CD14-positive monocyte (primary cell): ENCODE measurements at regions of chr6 and their contacts with region 1.

Region 1: GRCh38 chr6:139109558-139109957 is 25.3 kb upstream of the HECA start:
- DNase-seq: peak in 1 of 3 donors; percentile 23
- H3K4me3 ChIP-seq: no peak overlapping the region
- H3K4me3 Mint-ChIP-seq: no peak overlapping the region
- H3K27ac ChIP-seq: no peak overlapping the region
- H3K27ac Mint-ChIP-seq: no peak overlapping the region
- H3K4me1 ChIP-seq: no peaks in the 10 kb centered on the region
- H3K4me1 Mint-ChIP-seq: peaks cover 4% of the 10 kb centered on the region
- H3K27me3 ChIP-seq: no peaks in the 10 kb centered on the region
- H3K27me3 Mint-ChIP-seq: peaks cover 0 to 6% (median 0%) of the 10 kb centered on the region in 3 donors
- CTCF ChIP-seq: peak; percentile 28

Region 2: GRCh38 chr6:139091826-139092225 is 17.7 kb before region 1 on chr6:
- intact Hi-C with region 1: no loop called
- DNase-seq: no peak
- H3K4me3 ChIP-seq: no peak overlapping the region
- H3K4me3 Mint-ChIP-seq: no peak overlapping the region
- H3K27ac ChIP-seq: no peak overlapping the region
- H3K27ac Mint-ChIP-seq: no peak overlapping the region
- H3K4me1 ChIP-seq: no peaks in the 10 kb centered on the region
- H3K4me1 Mint-ChIP-seq: no peaks in the 10 kb centered on the region
- H3K27me3 ChIP-seq: no peaks in the 10 kb centered on the region
- H3K27me3 Mint-ChIP-seq: peaks cover 0 to 3% (median 3%) of the 10 kb centered on the region in 3 donors
- CTCF ChIP-seq: no peak

Region 3: GRCh38 chr6:140281236-140281635 is 1171.7 kb after region 1 on chr6:
- intact Hi-C with region 1: loop called in 1 of 2 experiments (anchors 10 kb)
- DNase-seq: no peak
- H3K4me3 ChIP-seq: no peak overlapping the region
- H3K4me3 Mint-ChIP-seq: no peak overlapping the region
- H3K27ac ChIP-seq: no peak overlapping the region
- H3K27ac Mint-ChIP-seq: no peak overlapping the region
- H3K4me1 ChIP-seq: no peaks in the 10 kb centered on the region
- H3K4me1 Mint-ChIP-seq: no peaks in the 10 kb centered on the region
- H3K27me3 ChIP-seq: no peaks in the 10 kb centered on the region
- H3K27me3 Mint-ChIP-seq: no peaks in the 10 kb centered on the region
- CTCF ChIP-seq: no peak